Colonic mucosa (tissue), 4 donors: ENCODE measurements at regions of chr15 and their contacts with region 1.

Region 1: DNA sequence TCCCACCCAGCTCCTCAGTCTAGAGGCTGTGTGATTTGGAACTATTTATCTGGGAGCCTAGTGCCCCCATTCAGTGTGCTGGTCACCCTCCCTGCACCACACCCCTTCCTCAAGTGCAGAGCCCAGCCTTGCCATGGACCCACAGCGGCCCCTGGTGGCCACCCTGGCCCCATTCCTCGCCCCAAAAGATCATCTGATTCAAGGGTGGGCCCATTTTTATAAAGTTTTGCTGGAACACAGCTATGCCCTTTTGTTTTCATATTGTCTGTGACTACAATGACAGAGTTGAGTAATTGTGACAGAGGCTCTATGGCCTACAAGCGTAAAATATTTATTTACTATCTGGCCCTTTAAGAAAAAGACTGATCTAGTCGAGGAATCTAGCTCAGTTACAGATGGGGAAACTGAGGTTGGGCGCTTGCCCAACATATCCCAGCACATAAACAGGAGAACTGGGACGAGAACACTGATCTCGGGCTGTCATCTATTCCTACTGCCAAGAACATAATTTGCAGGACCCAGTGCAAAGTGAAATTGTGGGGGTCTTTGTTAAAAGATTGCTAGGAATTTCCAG is 1.8 kb downstream of the FES start:
- DNase-seq: peak; percentile 82
- H3K4me3 ChIP-seq: no peak overlapping the region
- H3K27ac ChIP-seq: peak overlapping the region; percentile 89
- H3K4me1 ChIP-seq: peaks cover 5% of the 10 kb centered on the region
- H3K27me3 ChIP-seq: no peaks in the 10 kb centered on the region
- CTCF ChIP-seq: peak; percentile 95

Region 2: DNA sequence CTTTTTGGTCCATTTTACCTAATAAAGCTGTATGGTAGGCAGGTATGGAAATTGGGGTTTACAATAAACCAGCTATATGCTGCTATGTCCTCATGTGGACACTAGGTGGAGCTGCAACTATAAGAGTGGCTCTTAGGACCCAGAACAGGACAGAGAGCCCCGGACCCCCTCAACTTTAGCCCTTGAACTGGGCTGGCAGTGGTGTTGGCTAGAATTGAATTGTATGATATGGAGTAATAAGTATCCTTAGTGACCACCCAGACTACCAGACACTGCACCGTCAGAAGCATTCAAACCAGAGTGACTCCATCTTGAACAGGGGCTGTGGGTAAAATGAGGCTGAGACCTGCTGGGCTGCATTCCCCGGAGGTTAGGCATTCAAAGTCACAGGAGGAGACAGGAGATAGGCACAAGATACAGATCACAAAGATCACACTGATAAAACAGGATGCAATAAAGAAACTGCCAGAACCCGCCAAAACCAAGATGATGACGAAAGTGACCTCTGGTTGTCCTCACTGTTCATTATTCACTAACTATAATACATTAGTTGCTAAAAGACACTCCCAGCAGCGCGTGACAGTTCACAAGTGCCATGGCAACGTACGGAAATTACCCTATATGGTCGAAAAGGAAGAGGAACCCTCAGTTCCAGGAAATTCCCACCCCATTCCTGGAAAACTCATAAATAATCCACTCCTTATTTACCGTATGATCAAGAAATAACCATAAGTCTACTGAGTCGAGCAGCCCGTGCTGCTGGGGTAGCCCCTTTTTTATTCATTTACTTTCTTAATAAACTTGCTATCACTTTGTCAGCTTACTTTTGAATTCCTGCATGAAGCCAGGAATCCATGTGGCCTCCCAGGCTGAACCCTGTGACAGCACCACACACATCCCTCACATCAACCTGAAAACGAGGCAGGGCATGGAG is 237.7 kb before region 1 on chr15:
- intact Hi-C with region 1: loop called (anchors 2 kb)
- DNase-seq: peak; percentile 75
- H3K4me3 ChIP-seq: peak overlapping the region; percentile 11
- H3K27ac ChIP-seq: peak overlapping the region; percentile 62
- H3K4me1 ChIP-seq: peaks cover 6% of the 10 kb centered on the region
- H3K27me3 ChIP-seq: no peaks in the 10 kb centered on the region
- CTCF ChIP-seq: peak; percentile 86

Region 3: DNA sequence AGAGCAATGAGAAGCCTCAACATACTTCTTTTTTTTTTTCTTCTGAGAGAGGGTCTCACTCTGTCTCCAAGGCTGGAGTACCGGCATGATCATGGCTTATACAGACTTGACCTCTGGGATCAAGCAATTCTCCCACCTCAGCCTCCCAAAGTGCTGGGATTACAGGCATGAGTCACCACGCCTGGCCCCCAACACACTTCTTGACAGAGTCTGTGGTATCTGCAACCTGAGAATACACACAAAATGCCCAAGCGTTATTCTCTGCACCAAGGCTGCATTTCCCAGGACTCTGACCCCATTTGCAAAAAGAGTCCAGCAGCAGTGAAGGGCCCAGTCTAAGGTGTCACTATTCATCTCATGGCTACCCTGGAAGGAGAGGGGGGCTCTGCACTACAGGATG is 211.7 kb before region 1 on chr15:
- intact Hi-C with region 1: no loop called
- DNase-seq: no peak
- H3K4me3 ChIP-seq: no peak overlapping the region
- H3K27ac ChIP-seq: no peak overlapping the region
- H3K4me1 ChIP-seq: no peaks in the 10 kb centered on the region
- H3K27me3 ChIP-seq: no peaks in the 10 kb centered on the region
- CTCF ChIP-seq: no peak

Region 4: DNA sequence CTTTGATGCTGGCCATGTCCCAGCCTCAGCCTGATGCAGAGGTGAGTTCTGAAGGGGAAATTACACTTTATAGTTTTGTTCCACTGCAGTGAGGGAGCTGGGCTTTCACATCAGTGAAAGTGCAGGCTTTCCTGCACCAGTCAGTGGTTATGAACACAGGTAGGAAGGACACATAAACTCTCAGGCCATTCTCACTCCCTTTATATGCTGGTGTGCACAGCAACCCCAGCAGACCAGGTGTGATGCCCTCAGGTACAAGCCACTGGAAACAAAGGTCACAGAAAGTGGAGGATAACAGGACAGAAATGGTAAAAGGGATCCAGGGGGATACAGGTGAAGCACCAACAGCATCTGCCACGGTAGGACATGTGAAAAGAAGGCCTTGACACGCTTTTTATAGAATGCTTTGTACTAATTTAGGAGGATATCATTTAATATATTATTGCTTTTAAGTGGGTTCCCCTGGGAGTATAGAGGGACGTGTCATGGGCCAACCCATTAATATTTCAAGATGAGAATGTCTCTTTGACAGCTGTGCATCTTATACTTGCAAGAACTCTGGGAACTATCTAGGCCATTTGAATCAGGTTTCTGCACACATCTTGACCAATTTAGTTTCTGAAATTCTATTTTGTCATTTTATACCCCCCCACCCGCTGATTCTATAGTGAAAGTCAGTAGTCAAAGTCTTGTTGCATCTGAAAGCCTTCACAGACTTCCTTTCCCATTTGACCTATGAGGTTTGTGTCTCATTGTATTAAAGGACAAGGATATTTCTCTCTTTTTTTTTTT is 193.9 kb before region 1 on chr15:
- intact Hi-C with region 1: loop called (anchors 5 kb)
- DNase-seq: no peak
- H3K4me3 ChIP-seq: no peak overlapping the region
- H3K27ac ChIP-seq: no peak overlapping the region
- H3K4me1 ChIP-seq: no peaks in the 10 kb centered on the region
- H3K27me3 ChIP-seq: no peaks in the 10 kb centered on the region
- CTCF ChIP-seq: no peak